ENCODE measurements at regions of chr3 and their contacts with region 1.

Region 1: DNA sequence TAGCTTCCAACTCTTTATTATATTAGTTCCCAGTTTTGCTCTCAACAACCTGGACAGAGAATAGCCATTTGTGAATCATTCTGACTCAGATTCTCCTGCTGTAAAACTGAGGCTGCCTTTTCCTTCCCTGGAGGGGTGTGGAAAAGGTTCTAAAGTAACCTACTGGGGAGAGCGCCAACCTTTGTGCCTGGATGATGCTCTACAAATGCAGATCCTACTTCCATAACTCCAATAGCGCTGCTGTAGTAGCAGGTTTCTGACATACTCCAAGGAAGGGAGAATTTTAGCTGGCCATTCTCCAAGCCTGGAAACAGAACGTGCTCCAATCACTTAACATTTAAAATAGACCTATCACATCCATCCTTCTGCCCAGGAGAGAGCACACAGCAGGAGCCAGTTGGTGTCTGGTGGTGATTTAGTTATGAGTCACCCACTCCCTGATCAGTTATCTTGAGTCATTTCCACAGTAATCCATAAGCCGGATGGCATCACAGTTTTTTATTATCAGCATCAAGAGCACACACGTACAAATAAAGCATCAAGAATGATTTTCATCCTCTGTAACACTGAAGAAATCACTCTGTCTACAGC is 38.3 kb downstream of the MYH15 start:
- DNase-seq: peak; percentile 95
- ATAC-seq: peak; percentile 87
- H3K4me3 ChIP-seq: peak overlapping the region; percentile 35; the same call in 1 of the 2 replicates
- H3K27ac ChIP-seq: peak overlapping the region; percentile 95
- H3K4me1 ChIP-seq: peaks cover 41% of the 10 kb centered on the region
- H3K27me3 ChIP-seq: no peaks in the 10 kb centered on the region
- CTCF ChIP-seq: no peak

Region 2: GRCh38 chr3:107987036-107987947 is 484.8 kb before region 1 on chr3:
- CTCF ChIA-PET with region 1: no interaction called
- POLR2A ChIA-PET with region 1: interaction called, 4 read pairs
- intact Hi-C with region 1: loop called (anchors 5 kb)
- DNase-seq: peak; percentile 98
- ATAC-seq: peak; percentile 52
- H3K4me3 ChIP-seq: no peak overlapping the region
- H3K27ac ChIP-seq: peak overlapping the region; percentile 94
- H3K4me1 ChIP-seq: peaks cover 58% of the 10 kb centered on the region
- H3K27me3 ChIP-seq: no peaks in the 10 kb centered on the region
- CTCF ChIP-seq: no peak

Region 3: DNA sequence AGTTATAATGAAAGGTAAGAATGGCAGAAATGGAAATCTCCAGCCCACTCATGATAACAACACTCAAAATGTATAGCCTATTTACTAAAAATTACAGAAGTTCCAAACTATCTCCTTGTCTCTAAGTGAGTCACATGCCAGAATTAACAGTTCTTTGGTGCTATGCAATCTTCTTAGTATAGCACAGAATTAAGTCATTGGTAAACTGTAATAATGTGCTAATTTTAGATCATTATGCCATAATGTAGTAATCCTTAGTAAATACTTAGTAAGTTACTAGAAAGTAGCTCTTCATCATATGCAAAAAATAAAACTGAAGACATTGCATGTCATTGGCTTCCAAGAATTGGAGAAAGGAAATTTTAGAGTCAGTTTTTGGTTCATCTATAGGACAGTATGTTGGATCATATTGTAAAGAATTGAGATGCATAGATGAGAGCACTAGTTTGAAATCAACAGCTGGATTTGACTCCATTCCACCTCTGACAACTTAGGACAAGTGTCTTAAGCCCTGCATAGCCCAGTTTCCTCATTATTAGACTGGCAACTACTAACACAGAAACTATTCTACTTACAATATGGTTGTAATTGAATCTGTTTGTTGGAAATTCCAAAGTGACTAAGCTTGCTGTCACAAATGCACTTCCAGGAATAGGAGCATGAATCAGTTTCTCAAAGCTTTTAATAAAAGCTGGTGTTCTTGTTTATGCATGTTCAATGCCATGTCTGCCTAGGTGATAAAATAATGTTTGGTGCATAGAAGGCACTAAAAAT is 341.2 kb before region 1 on chr3:
- CTCF ChIA-PET with region 1: no interaction called
- POLR2A ChIA-PET with region 1: interaction called, 10 read pairs
- intact Hi-C with region 1: loop called (anchors 1 kb)
- DNase-seq: peak; percentile 95
- ATAC-seq: peak; percentile 86
- H3K4me3 ChIP-seq: no peak overlapping the region
- H3K27ac ChIP-seq: peak overlapping the region; percentile 90
- H3K4me1 ChIP-seq: peaks cover 38% of the 10 kb centered on the region
- H3K27me3 ChIP-seq: no peaks in the 10 kb centered on the region
- CTCF ChIP-seq: no peak

Region 4: GRCh38 chr3:108342837-108343478 is 129.1 kb before region 1 on chr3:
- CTCF ChIA-PET with region 1: no interaction called
- POLR2A ChIA-PET with region 1: no interaction called
- intact Hi-C with region 1: loop called (anchors 1 kb)
- DNase-seq: peak; percentile 80
- ATAC-seq: peak; percentile 93
- H3K4me3 ChIP-seq: no peak overlapping the region
- H3K27ac ChIP-seq: no peak overlapping the region
- H3K4me1 ChIP-seq: peaks cover 27% of the 10 kb centered on the region
- H3K27me3 ChIP-seq: no peaks in the 10 kb centered on the region
- CTCF ChIP-seq: no peak

Region 5: GRCh38 chr3:108391917-108392593 is 80.0 kb before region 1 on chr3:
- CTCF ChIA-PET with region 1: no interaction called
- POLR2A ChIA-PET with region 1: no interaction called
- intact Hi-C with region 1: loop called (anchors 5 kb)
- DNase-seq: peak; percentile 84
- ATAC-seq: peak; percentile 94
- H3K4me3 ChIP-seq: no peak overlapping the region
- H3K27ac ChIP-seq: peak overlapping the region; percentile 48
- H3K4me1 ChIP-seq: peaks cover 17% of the 10 kb centered on the region
- H3K27me3 ChIP-seq: no peaks in the 10 kb centered on the region
- CTCF ChIP-seq: no peak

Region 6: DNA sequence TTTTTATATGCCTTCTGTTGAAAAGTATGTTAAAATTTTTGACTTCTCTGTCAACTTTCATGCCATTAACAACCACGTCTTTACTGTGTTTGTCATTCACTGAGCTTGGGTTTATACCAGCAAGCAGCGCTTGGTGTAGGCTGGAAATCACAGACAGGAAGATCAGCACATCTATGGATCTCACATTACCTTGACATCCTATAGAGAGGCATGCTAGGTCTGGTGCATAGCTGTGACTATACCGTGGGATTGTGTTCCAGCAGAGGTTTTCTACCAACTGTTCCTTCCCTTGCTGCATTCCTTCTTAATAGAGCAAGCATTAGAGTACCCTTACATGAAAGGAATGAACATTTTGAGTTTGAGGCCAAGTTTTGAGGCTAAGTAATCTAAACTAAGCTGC is 170.4 kb after region 1 on chr3:
- CTCF ChIA-PET with region 1: no interaction called
- POLR2A ChIA-PET with region 1: no interaction called
- intact Hi-C with region 1: no loop called
- DNase-seq: no peak
- ATAC-seq: no peak
- H3K4me3 ChIP-seq: no peak overlapping the region
- H3K27ac ChIP-seq: no peak overlapping the region
- H3K4me1 ChIP-seq: no peaks in the 10 kb centered on the region
- H3K27me3 ChIP-seq: no peaks in the 10 kb centered on the region
- CTCF ChIP-seq: no peak

Region 7: DNA sequence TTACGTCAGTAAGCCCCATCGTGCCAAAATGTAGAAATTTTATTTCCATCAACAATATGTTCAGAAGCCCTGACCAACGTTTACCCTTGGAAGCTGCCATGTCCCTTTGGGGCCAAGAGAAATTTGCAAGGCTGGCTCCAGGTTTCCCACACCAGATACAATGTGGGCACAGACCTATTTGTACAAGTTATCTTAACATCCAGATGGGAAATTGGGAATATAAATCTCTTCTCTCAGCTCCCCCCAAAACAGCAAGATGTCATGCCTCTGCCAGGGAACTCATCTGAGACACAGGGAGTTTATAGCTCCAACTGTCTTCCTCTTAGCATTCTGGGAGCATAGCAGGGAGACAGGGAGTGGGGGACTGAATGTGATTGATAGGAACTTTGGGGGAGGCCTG is 853.6 kb after region 1 on chr3:
- CTCF ChIA-PET with region 1: no interaction called
- POLR2A ChIA-PET with region 1: no interaction called
- intact Hi-C with region 1: no loop called
- DNase-seq: no peak
- ATAC-seq: no peak
- H3K4me3 ChIP-seq: no peak overlapping the region
- H3K27ac ChIP-seq: no peak overlapping the region
- H3K4me1 ChIP-seq: no peaks in the 10 kb centered on the region
- H3K27me3 ChIP-seq: peaks cover 42% of the 10 kb centered on the region
- CTCF ChIP-seq: no peak

Measured in PC-3 (cell line).